Activated CD8-positive, alpha-beta T cell treated with anti-CD3 and anti-CD28 coated beads for 36 hours (primary cell): ENCODE measurements at regions of chr6 and their contacts with region 1.

Region 1: GRCh38 chr6:134161036-134161435 is 108.6 kb upstream of the SLC2A12 start:
- DNase-seq: no peak
- ATAC-seq: no peak
- H3K4me3 Mint-ChIP-seq: no peak overlapping the region
- H3K27ac Mint-ChIP-seq: no peak overlapping the region
- H3K4me1 Mint-ChIP-seq: no peaks in the 10 kb centered on the region
- H3K27me3 Mint-ChIP-seq: no peaks in the 10 kb centered on the region
- CTCF ChIP-seq: no peak

Region 2: DNA sequence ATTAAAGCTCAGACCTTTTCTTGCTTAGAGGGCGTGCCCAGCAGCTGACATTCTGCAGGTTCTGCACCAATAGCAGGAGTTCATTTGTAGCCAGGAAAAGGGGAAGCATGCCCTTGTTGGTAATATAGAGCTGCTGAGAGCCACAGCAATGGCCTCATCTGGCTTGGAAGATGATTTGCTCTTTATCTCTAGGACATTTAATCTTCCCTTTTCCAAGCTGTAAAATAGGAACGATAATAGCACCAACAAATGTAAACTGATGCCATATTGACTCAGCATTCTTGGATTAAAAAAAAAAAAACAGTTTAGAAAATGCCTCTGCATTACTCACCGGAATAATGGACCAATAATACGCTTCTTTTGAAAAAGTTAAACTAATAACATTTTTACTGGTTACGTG is 15.2 kb before region 1 on chr6:
- CTCF ChIA-PET with region 1: interaction called, 16 read pairs
- POLR2A ChIA-PET with region 1: no interaction called
- intact Hi-C with region 1: no loop called
- DNase-seq: no peak
- ATAC-seq: no peak
- H3K4me3 Mint-ChIP-seq: no peak overlapping the region
- H3K27ac Mint-ChIP-seq: no peak overlapping the region
- H3K4me1 Mint-ChIP-seq: no peaks in the 10 kb centered on the region
- H3K27me3 Mint-ChIP-seq: no peaks in the 10 kb centered on the region
- CTCF ChIP-seq: no peak